Activated CD4-positive, alpha-beta T cell treated with anti-CD3 and anti-CD28 coated beads for 36 hours (primary cell): ENCODE measurements at regions of chr3 and their contacts with region 1.

Region 1: GRCh38 chr3:57112206-57112605 is 51.7 kb downstream of the SPATA12 start:
- DNase-seq: no peak
- ATAC-seq: no peak
- H3K4me3 Mint-ChIP-seq: no peak overlapping the region
- H3K27ac Mint-ChIP-seq: no peak overlapping the region
- H3K4me1 Mint-ChIP-seq: no peaks in the 10 kb centered on the region
- H3K27me3 Mint-ChIP-seq: no peaks in the 10 kb centered on the region

Region 2: GRCh38 chr3:57179580-57180410 is 67.6 kb after region 1 on chr3:
- CTCF ChIA-PET with region 1: no interaction called
- POLR2A ChIA-PET with region 1: no interaction called
- intact Hi-C with region 1: no loop called
- DNase-seq: no peak
- ATAC-seq: no peak
- H3K4me3 Mint-ChIP-seq: no peak overlapping the region
- H3K27ac Mint-ChIP-seq: no peak overlapping the region
- H3K4me1 Mint-ChIP-seq: no peaks in the 10 kb centered on the region
- H3K27me3 Mint-ChIP-seq: peaks cover 8% of the 10 kb centered on the region

Region 3: DNA sequence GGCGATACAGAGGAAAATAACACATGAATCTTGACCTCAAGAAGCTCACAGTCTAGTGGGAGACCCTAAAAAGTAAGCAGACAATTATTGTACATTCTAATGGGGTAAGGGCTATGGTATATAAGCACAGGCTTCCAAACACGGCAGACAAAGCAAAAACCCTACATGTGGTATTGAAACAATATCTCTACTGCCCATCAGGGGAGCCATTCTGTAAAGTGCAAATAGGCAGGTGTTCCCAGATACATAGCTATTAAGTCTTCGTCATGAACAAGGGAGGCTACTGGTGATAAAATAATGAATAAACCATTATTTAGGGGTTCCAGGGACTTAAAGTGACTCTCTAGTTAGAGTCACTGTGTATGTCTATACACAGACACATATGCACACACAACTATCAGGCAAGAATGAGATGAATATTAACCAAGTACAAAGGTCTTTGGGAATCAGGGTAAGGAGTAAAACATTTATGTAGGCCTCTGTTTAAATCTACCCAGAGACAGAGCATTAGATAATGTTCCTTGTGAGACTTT is 218.9 kb after region 1 on chr3:
- CTCF ChIA-PET with region 1: no interaction called
- POLR2A ChIA-PET with region 1: interaction called, 11 read pairs
- intact Hi-C with region 1: no loop called
- DNase-seq: no peak
- ATAC-seq: no peak
- H3K4me3 Mint-ChIP-seq: no peak overlapping the region
- H3K27ac Mint-ChIP-seq: no peak overlapping the region
- H3K4me1 Mint-ChIP-seq: no peaks in the 10 kb centered on the region
- H3K27me3 Mint-ChIP-seq: peaks cover 9% of the 10 kb centered on the region